ENCODE measurements at regions of chr1 and their contacts with region 1.

Region 1: DNA sequence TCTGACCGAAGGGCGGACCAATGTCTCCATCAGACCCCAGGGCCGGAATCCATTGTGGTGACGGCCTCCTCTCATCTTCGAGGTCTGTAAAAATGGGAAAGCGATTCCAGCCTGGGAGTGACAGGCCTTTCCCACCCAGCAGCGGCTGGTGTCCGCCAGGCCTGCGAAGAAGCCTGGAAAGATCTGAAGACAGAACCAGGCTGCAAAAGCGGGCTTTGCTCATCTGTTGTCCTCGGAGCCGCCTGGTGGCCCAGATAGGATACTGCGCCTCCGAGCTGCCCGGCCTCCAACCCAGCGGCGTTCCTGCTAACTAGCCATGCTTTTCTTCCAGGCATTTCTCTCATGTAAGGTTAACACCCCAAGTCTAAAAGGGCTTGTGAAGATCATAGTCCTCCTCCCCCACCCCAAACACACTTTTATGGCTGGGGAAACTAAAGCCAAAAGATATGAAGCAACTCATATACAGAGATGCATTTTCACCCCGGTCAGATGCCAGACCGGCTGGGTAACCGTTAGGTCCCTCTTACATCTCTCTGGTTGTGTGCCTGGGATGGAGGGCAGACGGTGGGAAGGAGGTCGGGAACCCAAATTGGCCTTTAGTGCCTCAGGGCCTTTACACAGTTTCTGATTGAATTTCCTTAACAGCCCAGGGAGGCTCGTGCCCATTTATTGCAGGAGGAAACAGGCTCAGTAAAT is 1.9 kb upstream of the DHRS3 start:
- DNase-seq: peak; percentile 82
- H3K4me3 Mint-ChIP-seq: peak overlapping the region; percentile 96
- H3K27ac Mint-ChIP-seq: no peak overlapping the region
- H3K4me1 Mint-ChIP-seq: peaks cover 56% of the 10 kb centered on the region
- H3K27me3 Mint-ChIP-seq: peaks cover 14% of the 10 kb centered on the region

Region 2: GRCh38 chr1:12275369-12275768 is 344.6 kb before region 1 on chr1:
- CTCF ChIA-PET with region 1: interaction called, 34 read pairs
- POLR2A ChIA-PET with region 1: interaction called, 6 read pairs
- DNase-seq: peak; percentile 43
- H3K4me3 Mint-ChIP-seq: no peak overlapping the region
- H3K27ac Mint-ChIP-seq: no peak overlapping the region
- H3K4me1 Mint-ChIP-seq: no peaks in the 10 kb centered on the region
- H3K27me3 Mint-ChIP-seq: no peaks in the 10 kb centered on the region

Region 3: DNA sequence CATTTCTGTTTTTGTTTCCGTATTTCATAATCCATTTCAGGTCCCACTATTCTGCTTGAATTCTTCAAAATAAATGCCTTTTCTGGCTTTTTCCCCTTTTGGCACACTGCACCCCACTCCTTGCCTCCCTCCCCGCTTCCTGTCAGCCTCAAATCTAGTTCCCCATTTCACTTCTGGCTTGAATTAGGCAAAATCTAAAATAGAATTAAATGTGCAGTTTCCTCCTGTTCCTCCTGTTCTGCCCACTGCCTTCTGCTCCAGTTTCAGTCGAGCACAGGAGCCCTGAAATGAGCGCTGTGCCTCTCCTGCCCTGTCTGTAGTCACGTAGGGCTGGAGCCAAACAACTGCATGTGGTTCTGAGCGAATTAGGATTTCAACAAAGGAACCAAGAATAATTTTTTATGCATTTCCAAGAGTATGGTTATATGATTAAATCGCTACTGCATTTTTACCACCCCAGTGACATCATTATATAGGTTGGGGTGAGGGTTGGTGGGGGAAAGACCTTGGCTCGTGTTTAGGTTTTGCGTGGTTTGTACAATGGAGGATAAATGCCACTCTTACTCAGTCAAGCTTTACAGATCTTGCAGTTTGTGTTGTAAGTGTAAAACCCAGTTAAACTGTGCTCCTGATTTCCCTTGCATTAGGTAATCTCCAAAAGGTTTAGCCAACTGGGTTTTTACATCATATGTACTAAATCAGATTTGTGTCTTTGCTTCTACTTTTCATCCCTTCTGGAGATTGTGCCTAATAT is 275.2 kb before region 1 on chr1:
- CTCF ChIA-PET with region 1: interaction called, 3 read pairs
- POLR2A ChIA-PET with region 1: interaction called, 12 read pairs
- DNase-seq: peak; percentile 17
- H3K4me3 Mint-ChIP-seq: peak overlapping the region; percentile 64
- H3K27ac Mint-ChIP-seq: peak overlapping the region; percentile 86
- H3K4me1 Mint-ChIP-seq: peaks cover 49% of the 10 kb centered on the region
- H3K27me3 Mint-ChIP-seq: no peaks in the 10 kb centered on the region

Region 4: DNA sequence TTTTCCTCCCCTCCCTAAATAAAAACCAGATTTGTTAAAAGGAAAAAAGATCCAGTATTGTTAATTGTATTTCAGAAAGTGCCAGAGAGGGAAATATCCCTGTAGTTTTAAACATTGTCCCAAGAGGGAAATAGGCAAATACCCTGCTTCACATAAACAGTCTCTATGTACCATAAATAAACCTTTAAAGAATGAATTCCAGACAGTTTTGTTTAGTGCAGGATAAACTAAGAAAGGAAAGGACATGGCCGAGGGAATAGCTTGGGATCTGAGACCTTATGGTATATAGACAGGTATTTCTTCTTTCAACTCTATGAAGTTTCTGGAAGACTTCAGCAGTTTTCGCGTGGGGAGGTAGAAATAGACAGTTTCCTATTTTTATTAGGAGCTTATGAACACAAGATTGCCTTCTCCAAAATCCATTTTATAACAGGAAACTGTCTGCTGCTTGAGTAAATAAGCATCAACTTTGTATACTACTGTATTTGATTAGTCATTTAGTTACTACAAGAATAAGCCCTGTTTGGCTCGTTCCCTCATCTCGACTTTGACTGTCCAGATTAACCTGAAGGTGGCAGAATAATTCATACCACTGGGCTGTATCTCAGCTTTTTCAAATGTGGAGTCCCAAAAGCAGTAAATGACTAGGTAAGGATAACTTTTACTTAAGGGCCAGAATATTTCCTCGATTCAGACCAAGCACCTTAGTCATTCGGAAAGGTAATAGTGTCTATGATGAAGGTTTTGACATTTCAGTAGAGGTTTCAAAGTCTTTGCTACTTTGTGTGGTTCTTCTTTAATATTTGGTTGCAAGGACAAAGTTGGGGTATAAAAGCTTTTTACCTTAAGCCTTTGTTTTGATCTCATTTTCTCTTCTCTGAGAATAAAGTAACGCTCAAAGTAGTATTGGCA is 212.6 kb before region 1 on chr1:
- CTCF ChIA-PET with region 1: interaction called, 12 read pairs
- POLR2A ChIA-PET with region 1: interaction called, 8 read pairs
- DNase-seq: no peak
- H3K4me3 Mint-ChIP-seq: no peak overlapping the region
- H3K27ac Mint-ChIP-seq: no peak overlapping the region
- H3K4me1 Mint-ChIP-seq: peaks cover 10% of the 10 kb centered on the region
- H3K27me3 Mint-ChIP-seq: no peaks in the 10 kb centered on the region

Region 5: GRCh38 chr1:12481928-12482327 is 138.0 kb before region 1 on chr1:
- CTCF ChIA-PET with region 1: no interaction called
- POLR2A ChIA-PET with region 1: no interaction called
- DNase-seq: no peak
- H3K4me3 Mint-ChIP-seq: no peak overlapping the region
- H3K27ac Mint-ChIP-seq: no peak overlapping the region
- H3K4me1 Mint-ChIP-seq: peaks cover 45% of the 10 kb centered on the region
- H3K27me3 Mint-ChIP-seq: no peaks in the 10 kb centered on the region

Region 6: DNA sequence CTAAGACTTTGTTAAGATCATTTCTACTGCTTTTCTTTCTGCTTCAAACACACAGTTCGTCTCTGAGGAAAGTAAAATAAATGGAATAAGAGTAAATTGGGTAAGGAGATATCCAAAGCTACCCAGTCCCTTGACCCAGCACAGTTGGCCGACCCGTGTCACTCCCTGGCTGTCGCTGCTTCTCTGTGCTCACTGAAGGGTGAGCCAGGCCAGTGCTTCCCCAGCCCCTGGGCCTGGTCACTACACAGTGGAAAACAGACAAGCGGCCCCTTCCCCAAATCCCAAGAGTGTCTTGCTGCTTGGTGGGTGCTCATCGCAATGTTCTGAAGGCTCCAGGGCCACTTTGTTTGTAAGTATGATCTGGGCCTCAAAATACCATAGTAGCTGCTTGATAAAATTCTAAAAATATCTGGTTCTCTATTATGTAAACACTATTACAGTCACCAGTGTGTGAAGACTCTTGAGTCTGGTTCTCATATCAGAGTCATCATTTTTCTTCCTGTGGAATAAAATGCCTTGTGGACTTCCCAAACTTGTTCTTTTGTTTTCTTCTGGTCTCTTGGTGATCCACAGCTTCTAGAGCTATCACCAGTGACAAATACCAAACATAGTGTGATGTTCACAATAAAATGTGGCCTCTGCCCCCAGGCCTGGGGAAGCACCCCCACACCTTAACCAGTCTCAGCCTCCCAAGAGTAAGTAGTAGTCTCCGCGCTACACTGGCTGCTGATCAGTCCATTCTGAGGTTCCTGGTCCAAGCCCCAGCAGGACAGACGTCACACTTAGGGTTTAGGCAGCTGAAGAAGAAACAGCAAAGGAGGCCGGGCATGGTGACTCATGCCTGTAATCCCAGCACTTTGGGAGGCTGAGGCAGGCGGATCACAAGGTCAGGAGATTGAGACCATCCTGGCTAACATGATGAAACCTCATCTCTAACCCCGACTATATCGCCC is 108.1 kb before region 1 on chr1:
- CTCF ChIA-PET with region 1: interaction called, 12 read pairs
- POLR2A ChIA-PET with region 1: interaction called, 38 read pairs
- DNase-seq: no peak
- H3K4me3 Mint-ChIP-seq: peak overlapping the region; percentile 79
- H3K27ac Mint-ChIP-seq: peak overlapping the region; percentile 95
- H3K4me1 Mint-ChIP-seq: peaks cover 36% of the 10 kb centered on the region
- H3K27me3 Mint-ChIP-seq: no peaks in the 10 kb centered on the region

Region 7: DNA sequence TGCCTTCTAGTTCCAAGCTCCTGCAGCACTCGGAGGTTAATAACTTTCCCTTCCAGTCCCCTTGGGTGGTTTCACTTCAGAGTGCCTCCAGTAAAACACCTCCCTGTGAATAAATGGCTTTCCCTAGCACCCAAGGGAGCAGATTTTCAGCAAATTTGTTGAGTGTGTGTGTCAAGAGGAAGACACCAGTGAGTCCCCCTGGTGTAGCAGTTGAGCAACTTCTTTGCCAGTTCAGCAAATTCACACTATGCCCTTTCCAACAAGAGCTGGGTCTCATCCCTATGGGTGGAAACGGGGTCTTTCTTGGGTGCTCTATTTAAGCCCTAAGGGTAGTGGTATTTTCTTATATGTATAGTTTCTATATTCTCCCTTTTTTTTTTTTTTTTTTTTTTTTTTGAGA is 23.1 kb after region 1 on chr1:
- CTCF ChIA-PET with region 1: no interaction called
- POLR2A ChIA-PET with region 1: no interaction called
- DNase-seq: no peak
- H3K4me3 Mint-ChIP-seq: no peak overlapping the region
- H3K27ac Mint-ChIP-seq: no peak overlapping the region
- H3K4me1 Mint-ChIP-seq: no peaks in the 10 kb centered on the region
- H3K27me3 Mint-ChIP-seq: peaks cover 6% of the 10 kb centered on the region

Region 8: DNA sequence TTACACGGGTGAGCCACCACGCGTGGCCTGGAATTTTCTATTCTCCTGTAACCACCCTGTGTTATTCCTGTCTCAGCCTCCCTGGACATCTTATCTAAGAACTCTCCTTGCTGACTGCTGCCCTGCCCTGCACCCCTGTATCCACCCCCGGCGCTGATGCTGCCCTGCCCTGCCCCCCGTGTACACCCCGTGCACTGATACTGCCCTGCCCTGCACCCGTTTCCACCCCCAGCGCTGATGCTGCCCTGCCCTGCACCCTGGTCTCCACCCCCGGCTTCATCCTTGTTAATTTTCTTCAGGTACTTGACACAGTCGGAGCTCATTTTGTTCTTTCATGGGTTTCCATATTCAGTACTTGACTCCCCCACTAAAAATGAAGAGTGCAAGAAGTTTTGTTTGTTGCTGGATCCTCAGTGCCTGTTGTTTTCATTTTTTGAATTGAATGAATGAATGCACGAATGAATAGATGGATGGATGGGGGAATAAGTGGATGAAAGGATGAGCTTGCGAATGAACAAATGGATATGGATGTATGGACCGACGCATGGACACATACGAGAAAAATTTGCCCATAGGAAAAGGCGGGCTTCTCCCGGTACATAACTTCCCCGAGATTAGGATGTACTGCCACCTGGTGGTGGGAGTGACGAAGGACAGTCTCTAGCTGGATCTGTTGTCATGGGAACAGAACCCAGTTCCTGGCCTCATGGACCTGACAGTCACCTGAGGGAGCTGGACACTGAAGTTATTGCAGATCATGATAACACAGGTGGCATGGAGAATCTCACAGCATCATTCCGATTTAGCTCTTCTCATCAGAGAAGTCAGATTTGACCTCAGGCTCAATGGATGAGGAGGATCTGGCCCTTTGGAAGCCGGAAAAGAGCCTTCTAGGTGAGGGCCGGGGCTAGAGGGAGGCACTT is 38.9 kb after region 1 on chr1:
- CTCF ChIA-PET with region 1: interaction called, 21 read pairs
- POLR2A ChIA-PET with region 1: interaction called, 3 read pairs
- DNase-seq: peak; percentile 72
- H3K4me3 Mint-ChIP-seq: peak overlapping the region; percentile 25
- H3K27ac Mint-ChIP-seq: no peak overlapping the region
- H3K4me1 Mint-ChIP-seq: peaks cover 11% of the 10 kb centered on the region
- H3K27me3 Mint-ChIP-seq: peaks cover 13% of the 10 kb centered on the region

Measured in activated CD4-positive, alpha-beta memory T cell treated with anti-CD3 and anti-CD28 coated beads, Interleukin-2, amount 10 ng/mL, durations not matched to agents 7 days and 5 days (primary cell).